HepG2 (cell line): ENCODE measurements at regions of chr5 and their contacts with region 1.

Region 1: GRCh38 chr5:11182441-11183268 is 421.6 kb upstream of the DAP start:
- DNase-seq: peak; percentile 23
- ATAC-seq: peak; percentile 73
- H3K4me3 ChIP-seq: no peak overlapping the region
- H3K27ac ChIP-seq: no peak overlapping the region
- H3K4me1 ChIP-seq: no peaks in the 10 kb centered on the region
- H3K27me3 ChIP-seq: no peaks in the 10 kb centered on the region
- CTCF ChIP-seq: peak; percentile 59
- EP300 ChIP-seq: no peak
- POLR2A ChIP-seq: no peak
- RAD21 ChIP-seq: no peak

Region 2: GRCh38 chr5:10987930-10988504 is 194.6 kb before region 1 on chr5:
- CTCF ChIA-PET with region 1: interaction called, 7 read pairs
- POLR2A ChIA-PET with region 1: no interaction called
- in situ Hi-C with region 1: loop called (anchors 5 kb)
- intact Hi-C with region 1: loop called (anchors 1 kb)
- DNase-seq: peak; percentile 43
- ATAC-seq: peak; percentile 99
- H3K4me3 ChIP-seq: no peak overlapping the region
- H3K27ac ChIP-seq: no peak overlapping the region
- H3K4me1 ChIP-seq: no peaks in the 10 kb centered on the region
- H3K27me3 ChIP-seq: peaks cover 0 to 5% of the 10 kb centered on the region in 2 experiments; a peak in 2 of 5 replicates
- CTCF ChIP-seq: peak; percentile 90
- EP300 ChIP-seq: no peak
- POLR2A ChIP-seq: no peak
- RAD21 ChIP-seq: peak; percentile 74